Left colon (tissue), 2 donors: ENCODE measurements at regions of chr12 and their contacts with region 1.

Region 1: GRCh38 chr12:56688129-56688845 is at the start of gene PTGES3:
- DNase-seq: peak; percentile 97 to 99
- ATAC-seq: peak; percentile 81
- total RNA-seq, gene PTGES3: 149 to 160 TPM

Region 2: GRCh38 chr12:56636675-56637540 is 51.4 kb before region 1 on chr12:
- intact Hi-C with region 1: loop called in 1 of 2 experiments (anchors 10 kb)
- DNase-seq: peak; percentile 99 to 100
- ATAC-seq: peak; percentile 67